PC-3 (cell line): ENCODE measurements at regions of chr2 and their contacts with region 1.

Region 1: GRCh38 chr2:160666154-160667060 is 172.8 kb upstream of the RBMS1 start:
- DNase-seq: peak; percentile 97
- ATAC-seq: peak; percentile 97
- H3K4me3 ChIP-seq: peak overlapping the region; percentile 52
- H3K27ac ChIP-seq: peak overlapping the region; percentile 92
- H3K4me1 ChIP-seq: peaks cover 40% of the 10 kb centered on the region
- H3K27me3 ChIP-seq: no peaks in the 10 kb centered on the region
- CTCF ChIP-seq: no peak

Region 2: DNA sequence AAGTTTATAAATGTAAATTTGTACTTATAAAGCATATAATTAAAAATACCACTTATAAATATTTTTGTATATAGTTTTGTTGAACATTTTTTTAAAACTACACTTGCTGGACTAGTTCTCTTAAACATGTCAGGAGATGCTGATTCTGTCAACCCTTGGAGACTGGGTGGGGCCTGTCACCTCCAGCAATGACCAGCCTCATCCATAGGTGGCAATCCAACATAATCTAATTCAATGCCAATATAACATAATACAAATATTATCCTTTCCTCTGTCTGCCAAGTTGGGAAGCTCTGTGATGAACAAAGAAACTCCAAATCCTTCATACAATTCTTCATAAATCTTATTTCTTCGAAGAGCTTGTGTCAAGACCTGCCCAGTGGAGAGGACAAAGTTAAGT is 313.2 kb before region 1 on chr2:
- CTCF ChIA-PET with region 1: no interaction called
- POLR2A ChIA-PET with region 1: no interaction called
- intact Hi-C with region 1: loop called (anchors 10 kb)
- DNase-seq: peak; percentile 49
- ATAC-seq: peak; percentile 27; the same call in 1 of the 2 replicates
- H3K4me3 ChIP-seq: no peak overlapping the region
- H3K27ac ChIP-seq: peak overlapping the region; percentile 21; the same call in 1 of the 2 replicates
- H3K4me1 ChIP-seq: peaks cover 53% of the 10 kb centered on the region
- H3K27me3 ChIP-seq: no peaks in the 10 kb centered on the region
- CTCF ChIP-seq: peak; percentile 63

Region 3: DNA sequence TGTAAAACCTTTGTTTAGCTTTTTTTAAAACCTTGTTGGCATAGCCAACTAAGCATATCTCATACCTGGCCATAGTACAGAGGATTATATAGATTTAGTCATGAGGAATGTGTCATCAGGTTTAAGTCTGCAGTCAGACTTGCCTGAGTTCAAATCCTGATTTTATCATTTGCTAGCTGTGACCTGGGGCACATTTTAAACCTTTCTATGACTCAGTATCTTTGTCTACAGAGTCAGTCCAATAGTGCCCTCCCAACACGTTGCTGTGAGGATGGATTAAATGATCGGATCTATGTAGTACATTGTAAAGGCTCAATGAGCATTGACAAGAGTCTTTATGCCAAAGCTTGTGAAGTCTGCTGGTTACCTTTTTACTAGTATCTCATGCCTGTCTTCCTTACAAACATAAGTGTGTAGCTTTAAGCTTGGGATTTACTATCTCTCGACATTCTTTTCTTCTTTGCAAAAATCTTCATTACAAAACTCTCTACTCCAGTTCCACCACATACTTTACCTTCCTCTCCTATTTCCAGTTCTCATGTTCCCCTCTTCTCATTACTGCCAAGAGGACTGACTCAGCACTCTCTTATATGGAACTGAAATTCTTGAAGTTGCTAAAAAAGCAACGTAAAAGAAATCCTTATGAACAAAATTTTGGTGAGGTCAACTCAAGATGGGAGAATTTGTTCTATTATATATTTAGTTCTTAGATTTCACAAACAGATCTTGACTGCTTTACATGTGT is 104.7 kb before region 1 on chr2:
- CTCF ChIA-PET with region 1: no interaction called
- POLR2A ChIA-PET with region 1: no interaction called
- intact Hi-C with region 1: no loop called
- DNase-seq: peak; percentile 95
- ATAC-seq: peak; percentile 81
- H3K4me3 ChIP-seq: peak overlapping the region; percentile 28; the same call in 1 of the 2 replicates
- H3K27ac ChIP-seq: peak overlapping the region; percentile 93
- H3K4me1 ChIP-seq: peaks cover 30% of the 10 kb centered on the region
- H3K27me3 ChIP-seq: no peaks in the 10 kb centered on the region
- CTCF ChIP-seq: no peak

Region 4: DNA sequence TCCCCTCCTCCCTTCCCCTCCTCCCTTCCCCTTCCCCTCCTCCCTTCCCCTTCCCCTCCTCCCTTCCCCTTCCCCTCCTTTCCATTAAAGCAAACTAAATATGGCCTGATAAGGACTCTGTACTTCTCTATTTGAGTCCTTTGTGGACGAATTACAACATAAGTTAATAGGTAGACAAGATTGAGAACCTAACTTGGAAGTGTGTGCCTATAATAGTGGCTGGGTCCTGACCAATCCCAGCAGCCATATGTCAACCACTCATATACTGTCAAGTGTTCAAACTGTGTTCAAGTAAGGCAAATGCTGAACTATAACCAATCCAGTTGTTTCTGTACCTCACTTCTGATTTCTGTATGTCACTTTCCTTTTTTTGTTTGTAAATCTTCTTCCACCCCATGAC is 75.7 kb before region 1 on chr2:
- CTCF ChIA-PET with region 1: no interaction called
- POLR2A ChIA-PET with region 1: no interaction called
- intact Hi-C with region 1: loop called (anchors 2 kb)
- DNase-seq: no peak
- ATAC-seq: no peak
- H3K4me3 ChIP-seq: no peak overlapping the region
- H3K27ac ChIP-seq: no peak overlapping the region
- H3K4me1 ChIP-seq: no peaks in the 10 kb centered on the region
- H3K27me3 ChIP-seq: no peaks in the 10 kb centered on the region
- CTCF ChIP-seq: no peak

Region 5: GRCh38 chr2:160652236-160652635 is 14.2 kb before region 1 on chr2:
- CTCF ChIA-PET with region 1: interaction called, 4 read pairs
- POLR2A ChIA-PET with region 1: interaction called, 5 read pairs
- intact Hi-C with region 1: loop called (anchors 1 kb)
- DNase-seq: no peak
- ATAC-seq: no peak
- H3K4me3 ChIP-seq: no peak overlapping the region
- H3K27ac ChIP-seq: no peak overlapping the region
- H3K4me1 ChIP-seq: peaks cover 53% of the 10 kb centered on the region
- H3K27me3 ChIP-seq: no peaks in the 10 kb centered on the region
- CTCF ChIP-seq: no peak

Region 6: GRCh38 chr2:160715428-160715827 is 49.0 kb after region 1 on chr2:
- CTCF ChIA-PET with region 1: no interaction called
- POLR2A ChIA-PET with region 1: no interaction called
- intact Hi-C with region 1: no loop called
- DNase-seq: no peak
- ATAC-seq: no peak
- H3K4me3 ChIP-seq: no peak overlapping the region
- H3K27ac ChIP-seq: no peak overlapping the region
- H3K4me1 ChIP-seq: peaks cover 19% of the 10 kb centered on the region
- H3K27me3 ChIP-seq: no peaks in the 10 kb centered on the region
- CTCF ChIP-seq: no peak

Region 7: GRCh38 chr2:160970052-160970965 is 303.9 kb after region 1 on chr2:
- CTCF ChIA-PET with region 1: no interaction called
- POLR2A ChIA-PET with region 1: no interaction called
- intact Hi-C with region 1: loop called (anchors 2 kb)
- DNase-seq: peak; percentile 87
- ATAC-seq: peak; percentile 70
- H3K4me3 ChIP-seq: peak overlapping the region; percentile 26; the same call in 1 of the 2 replicates
- H3K27ac ChIP-seq: peak overlapping the region; percentile 65
- H3K4me1 ChIP-seq: peaks cover 11% of the 10 kb centered on the region
- H3K27me3 ChIP-seq: no peaks in the 10 kb centered on the region
- CTCF ChIP-seq: peak; percentile 94